Spleen (tissue), 13 donors: ENCODE measurements at regions of chr6 and their contacts with region 1.

Region 1: DNA sequence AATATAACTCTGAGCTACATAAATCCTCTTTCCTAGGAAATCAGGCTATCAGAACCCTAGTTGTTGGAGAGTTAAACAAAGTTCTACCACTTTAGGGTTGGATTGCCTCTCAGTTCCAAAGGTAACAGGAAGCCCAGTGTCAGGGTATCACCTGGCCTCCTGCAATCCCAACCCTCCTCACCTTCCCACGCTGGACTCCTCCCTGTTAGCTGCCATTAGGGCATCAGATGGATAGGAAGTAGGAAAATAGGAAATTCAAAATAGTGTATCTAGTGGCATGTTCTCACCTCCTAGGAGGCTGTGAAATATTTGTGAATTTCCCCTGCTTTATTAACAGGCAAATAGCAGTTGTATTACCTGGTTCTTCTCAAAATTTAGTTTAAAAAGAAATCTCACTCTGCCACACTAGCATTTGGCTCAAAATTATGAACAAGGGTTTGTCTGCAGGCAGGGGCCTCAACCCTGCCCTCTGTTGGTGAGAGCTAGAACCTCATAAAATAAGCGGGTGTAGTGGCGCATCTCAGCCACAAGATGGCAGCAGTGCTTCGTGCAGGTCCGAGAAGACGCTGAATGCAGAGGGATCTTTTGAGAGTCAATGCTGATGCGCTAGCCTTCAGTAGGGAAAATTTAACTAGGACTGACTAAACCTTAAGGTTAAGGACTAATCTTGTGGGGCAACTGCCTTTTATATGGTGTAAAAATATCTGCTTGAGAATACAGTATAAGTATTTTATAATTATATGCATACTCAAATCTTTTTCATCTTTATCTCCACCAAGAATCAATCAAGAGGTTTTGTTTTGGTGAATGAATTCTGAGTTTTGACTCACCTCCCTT is 209.8 kb upstream of the KCNQ5 start:
- DNase-seq: peak; percentile 89
- H3K4me3 ChIP-seq: no peak overlapping the region
- H3K27ac ChIP-seq: no peak overlapping the region
- H3K4me1 ChIP-seq: peaks cover 0 to 4% (median 0%) of the 10 kb centered on the region in 6 donors
- H3K27me3 ChIP-seq: peaks cover 0 to 13% (median 4%) of the 10 kb centered on the region in 7 donors
- CTCF ChIP-seq: peak; percentile 96 to 100 (median 99)
- POLR2A ChIP-seq: no peak

Region 2: GRCh38 chr6:72260489-72260888 is 151.6 kb before region 1 on chr6:
- intact Hi-C with region 1: no loop called
- DNase-seq: no peak
- H3K4me3 ChIP-seq: no peak overlapping the region
- H3K27ac ChIP-seq: no peak overlapping the region
- H3K4me1 ChIP-seq: no peaks in the 10 kb centered on the region
- H3K27me3 ChIP-seq: no peaks in the 10 kb centered on the region
- CTCF ChIP-seq: no peak
- POLR2A ChIP-seq: no peak

Region 3: GRCh38 chr6:72464791-72465691 is 53.0 kb after region 1 on chr6:
- intact Hi-C with region 1: no loop called
- DNase-seq: no peak
- H3K4me3 ChIP-seq: no peak overlapping the region
- H3K27ac ChIP-seq: no peak overlapping the region
- H3K4me1 ChIP-seq: no peaks in the 10 kb centered on the region
- H3K27me3 ChIP-seq: peaks cover 0 to 15% (median 0%) of the 10 kb centered on the region in 7 donors
- CTCF ChIP-seq: no peak
- POLR2A ChIP-seq: no peak

Region 4: GRCh38 chr6:73180763-73181619 is 768.9 kb after region 1 on chr6:
- intact Hi-C with region 1: loop called (anchors 10 kb)
- DNase-seq: no peak
- H3K4me3 ChIP-seq: peak overlapping the region in 5 of 8 donors; percentile 8 to 55 (median 10)
- H3K27ac ChIP-seq: peak overlapping the region in 1 of 8 donors; percentile 9
- H3K4me1 ChIP-seq: peaks cover 0 to 25% (median 5%) of the 10 kb centered on the region in 6 donors
- H3K27me3 ChIP-seq: no peaks in the 10 kb centered on the region
- CTCF ChIP-seq: peak; percentile 54 to 81 (median 77)
- POLR2A ChIP-seq: no peak